ENCODE measurements at regions of chr16 and their contacts with region 1.

Region 1: DNA sequence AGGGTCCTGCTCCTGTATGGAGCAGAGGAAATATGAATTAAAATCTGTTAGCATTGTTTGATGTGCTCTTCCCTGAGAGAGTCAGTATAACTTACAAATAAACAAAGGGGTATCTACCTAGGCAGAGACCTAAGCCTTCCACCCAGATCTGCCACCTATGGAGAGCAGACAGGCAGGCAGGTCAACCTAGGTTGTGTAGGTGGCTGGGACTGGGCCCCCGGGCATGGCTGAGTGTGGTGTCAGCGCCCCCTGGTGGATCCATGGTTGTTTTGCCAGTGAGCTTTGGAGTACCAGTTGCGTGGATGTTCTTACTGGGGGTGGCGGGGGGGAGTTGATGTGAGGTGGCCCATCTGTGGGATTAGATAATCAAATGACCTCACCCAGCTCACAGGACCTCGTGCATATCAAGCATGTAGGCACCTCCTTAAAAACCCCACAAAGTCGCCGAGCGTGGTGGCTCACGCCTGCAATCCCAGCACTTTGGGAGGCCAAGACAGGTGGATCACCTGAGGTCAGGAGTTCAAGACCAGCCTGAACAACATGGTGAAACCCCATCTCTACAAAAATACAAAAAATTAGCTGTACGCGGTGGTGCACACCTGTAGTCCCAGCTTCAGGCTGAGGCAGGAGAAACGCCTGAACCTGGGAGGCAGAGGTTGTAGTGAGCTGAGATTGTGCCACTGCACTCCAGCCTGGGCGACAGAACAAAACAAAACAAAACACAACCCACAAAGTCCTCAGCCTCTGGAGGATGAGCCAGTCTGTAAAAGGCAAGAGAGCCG is 17.6 kb downstream of the DUS2 start:
- DNase-seq: peak; percentile 91
- H3K4me3 Mint-ChIP-seq: no peak overlapping the region
- H3K27ac Mint-ChIP-seq: peak overlapping the region; percentile 74
- H3K4me1 Mint-ChIP-seq: peaks cover 29% of the 10 kb centered on the region
- H3K27me3 Mint-ChIP-seq: no peaks in the 10 kb centered on the region

Region 2: GRCh38 chr16:67883872-67884261 is 156.8 kb before region 1 on chr16:
- CTCF ChIA-PET with region 1: interaction called, 15 read pairs
- POLR2A ChIA-PET with region 1: interaction called, 3 read pairs
- DNase-seq: peak; percentile 71
- H3K4me3 Mint-ChIP-seq: no peak overlapping the region
- H3K27ac Mint-ChIP-seq: no peak overlapping the region
- H3K4me1 Mint-ChIP-seq: no peaks in the 10 kb centered on the region
- H3K27me3 Mint-ChIP-seq: no peaks in the 10 kb centered on the region

Region 3: GRCh38 chr16:67993189-67994039 is 47.3 kb before region 1 on chr16:
- CTCF ChIA-PET with region 1: interaction called, 36 read pairs
- POLR2A ChIA-PET with region 1: interaction called, 3 read pairs
- DNase-seq: peak; percentile 85
- H3K4me3 Mint-ChIP-seq: peak overlapping the region; percentile 71
- H3K27ac Mint-ChIP-seq: peak overlapping the region; percentile 97
- H3K4me1 Mint-ChIP-seq: peaks cover 41% of the 10 kb centered on the region
- H3K27me3 Mint-ChIP-seq: no peaks in the 10 kb centered on the region

Region 4: DNA sequence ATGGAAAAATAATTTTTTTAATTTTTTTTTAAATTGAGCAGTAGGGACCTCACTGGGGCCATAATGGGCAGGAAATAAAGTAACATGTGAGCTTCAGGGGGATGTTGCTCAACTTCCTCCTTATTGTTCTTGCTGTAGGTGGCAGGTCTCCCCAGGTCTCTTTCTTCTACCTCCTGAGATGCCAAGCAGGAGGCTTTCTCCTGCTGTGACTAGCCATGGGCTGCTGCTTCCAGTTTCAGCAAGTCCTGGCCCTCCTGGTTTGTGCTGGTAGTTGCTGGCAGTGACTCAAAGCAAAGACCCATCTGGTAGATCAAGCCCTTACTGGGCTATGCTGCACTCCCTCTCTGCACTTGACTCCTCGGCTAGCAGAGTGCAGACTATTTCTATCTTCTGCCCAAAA is 27.3 kb before region 1 on chr16:
- CTCF ChIA-PET with region 1: interaction called, 11 read pairs
- POLR2A ChIA-PET with region 1: interaction called, 3 read pairs
- DNase-seq: no peak
- H3K4me3 Mint-ChIP-seq: no peak overlapping the region
- H3K27ac Mint-ChIP-seq: no peak overlapping the region
- H3K4me1 Mint-ChIP-seq: peaks cover 21% of the 10 kb centered on the region
- H3K27me3 Mint-ChIP-seq: peaks cover 2% of the 10 kb centered on the region

Region 5: GRCh38 chr16:68064791-68065365 is 24.2 kb after region 1 on chr16:
- CTCF ChIA-PET with region 1: interaction called, 15 read pairs
- POLR2A ChIA-PET with region 1: no interaction called
- DNase-seq: peak; percentile 83
- H3K4me3 Mint-ChIP-seq: no peak overlapping the region
- H3K27ac Mint-ChIP-seq: peak overlapping the region; percentile 84
- H3K4me1 Mint-ChIP-seq: peaks cover 88% of the 10 kb centered on the region
- H3K27me3 Mint-ChIP-seq: no peaks in the 10 kb centered on the region

Region 6: DNA sequence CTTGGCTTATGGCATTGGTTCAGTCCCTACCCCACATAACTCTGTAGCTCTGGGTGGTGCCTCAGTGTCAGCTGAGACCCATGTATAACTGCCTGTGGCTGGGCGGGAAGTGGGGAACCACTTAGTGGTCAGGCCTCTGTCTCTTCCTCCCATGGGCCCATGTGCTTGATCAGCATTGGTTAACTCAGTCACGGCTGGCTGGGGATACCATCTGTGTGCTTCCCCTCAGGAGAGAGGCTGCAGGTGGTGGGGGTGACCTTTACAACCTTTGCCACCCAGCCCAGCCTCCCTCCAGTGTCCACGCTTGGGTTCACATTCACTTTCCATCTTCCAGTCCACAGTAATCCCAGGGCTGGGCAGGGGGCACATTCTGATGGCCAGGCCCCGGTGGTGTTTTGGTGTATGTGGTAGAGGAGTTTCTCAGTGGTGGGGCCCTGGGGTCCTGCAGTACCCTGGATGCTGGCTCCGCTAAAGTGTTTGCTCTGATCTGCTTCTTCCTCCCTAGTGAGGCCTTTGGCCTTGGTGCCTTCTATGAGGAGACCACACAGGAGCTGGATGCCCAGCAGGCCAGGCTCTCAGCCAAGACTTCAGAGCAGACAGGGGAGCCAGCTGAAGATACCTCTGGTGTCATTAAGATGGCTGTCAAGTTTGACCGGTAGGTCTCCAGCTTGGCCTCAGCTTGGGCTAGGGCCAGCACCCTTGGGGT is 34.3 kb after region 1 on chr16:
- CTCF ChIA-PET with region 1: interaction called, 10 read pairs
- POLR2A ChIA-PET with region 1: no interaction called
- DNase-seq: peak; percentile 94
- H3K4me3 Mint-ChIP-seq: peak overlapping the region; percentile 58
- H3K27ac Mint-ChIP-seq: peak overlapping the region; percentile 95
- H3K4me1 Mint-ChIP-seq: peaks cover 89% of the 10 kb centered on the region
- H3K27me3 Mint-ChIP-seq: no peaks in the 10 kb centered on the region

Region 7: GRCh38 chr16:68275611-68276191 is 235.0 kb after region 1 on chr16:
- CTCF ChIA-PET with region 1: no interaction called
- POLR2A ChIA-PET with region 1: no interaction called
- DNase-seq: peak; percentile 45
- H3K4me3 Mint-ChIP-seq: peak overlapping the region; percentile 38
- H3K27ac Mint-ChIP-seq: peak overlapping the region; percentile 91
- H3K4me1 Mint-ChIP-seq: peaks cover 69% of the 10 kb centered on the region
- H3K27me3 Mint-ChIP-seq: no peaks in the 10 kb centered on the region